Activated B cell treated with CpG ODN at 0.5 μM for 24 hours (primary cell): ENCODE measurements at regions of chr6 and their contacts with region 1.

Region 1: DNA sequence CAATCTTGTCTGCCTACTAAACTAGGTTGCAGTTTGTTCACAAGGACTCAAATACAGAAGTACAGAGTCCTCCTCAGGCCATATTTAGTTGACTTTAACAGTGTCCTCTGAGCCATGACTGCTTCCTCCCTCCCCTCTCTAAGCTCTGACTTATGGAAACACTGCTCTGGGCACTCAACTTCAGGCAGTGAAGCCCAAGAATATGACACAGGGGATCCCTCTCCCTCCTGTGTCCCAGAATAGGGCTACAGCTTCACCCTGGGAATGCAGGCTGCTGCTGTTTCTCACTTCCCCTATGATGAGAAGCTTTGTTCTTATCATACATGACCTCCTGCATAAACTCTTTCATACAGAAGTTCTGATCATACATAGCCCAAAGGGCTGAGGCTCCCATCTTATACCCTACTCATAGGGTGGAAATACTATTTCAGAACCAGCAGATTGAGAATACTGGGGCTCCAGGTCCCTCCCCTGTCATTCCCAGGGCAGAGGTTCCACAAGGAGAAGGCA is 97.3 kb upstream of the UST start:
- DNase-seq: no peak
- ATAC-seq: peak; percentile 79
- H3K4me3 Mint-ChIP-seq: peak overlapping the region; percentile 60
- H3K27ac Mint-ChIP-seq: peak overlapping the region; percentile 76
- H3K4me1 Mint-ChIP-seq: peaks cover 24% of the 10 kb centered on the region
- H3K27me3 Mint-ChIP-seq: no peaks in the 10 kb centered on the region
- CTCF ChIP-seq: no peak

Region 2: GRCh38 chr6:148608199-148608951 is 41.1 kb before region 1 on chr6:
- CTCF ChIA-PET with region 1: no interaction called
- POLR2A ChIA-PET with region 1: interaction called, 4 read pairs
- intact Hi-C with region 1: loop called (anchors 5 kb)
- DNase-seq: no peak
- ATAC-seq: no peak
- H3K4me3 Mint-ChIP-seq: no peak overlapping the region
- H3K27ac Mint-ChIP-seq: no peak overlapping the region
- H3K4me1 Mint-ChIP-seq: no peaks in the 10 kb centered on the region
- H3K27me3 Mint-ChIP-seq: no peaks in the 10 kb centered on the region
- CTCF ChIP-seq: no peak

Region 3: DNA sequence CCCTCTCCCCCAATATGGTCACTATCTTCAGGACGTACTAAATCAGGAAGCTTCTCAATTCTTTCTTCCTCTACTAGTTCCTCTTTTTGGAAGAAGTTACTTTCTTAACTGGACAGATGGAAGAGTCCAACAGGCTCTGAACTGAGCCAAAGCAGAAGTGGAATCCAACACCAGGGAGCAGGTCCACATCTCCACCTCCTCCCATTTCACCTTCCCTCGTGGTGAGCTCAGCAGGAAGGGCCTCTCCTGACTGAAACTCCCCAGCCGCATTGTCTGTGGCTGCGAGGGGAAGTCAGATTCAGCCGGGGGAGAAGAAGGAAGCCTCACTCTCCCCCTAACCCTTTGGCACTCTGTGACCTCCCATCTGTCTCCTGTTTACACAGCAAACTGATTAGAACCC is 33.5 kb after region 1 on chr6:
- CTCF ChIA-PET with region 1: no interaction called
- POLR2A ChIA-PET with region 1: no interaction called
- intact Hi-C with region 1: loop called (anchors 5 kb)
- DNase-seq: no peak
- ATAC-seq: peak; percentile 51
- H3K4me3 Mint-ChIP-seq: peak overlapping the region; percentile 58
- H3K27ac Mint-ChIP-seq: peak overlapping the region; percentile 84
- H3K4me1 Mint-ChIP-seq: peaks cover 54% of the 10 kb centered on the region
- H3K27me3 Mint-ChIP-seq: no peaks in the 10 kb centered on the region
- CTCF ChIP-seq: no peak